ENCODE measurements at regions of chr6 and their contacts with region 1.

Region 1: GRCh38 chr6:139375232-139376016 is 976 bp upstream of the CITED2 start:
- DNase-seq: peak; percentile 90
- ATAC-seq: peak; percentile 75 to 85

Region 2: GRCh38 chr6:139323511-139324300 is 51.7 kb before region 1 on chr6:
- intact Hi-C with region 1: no loop called
- DNase-seq: peak; percentile 77
- ATAC-seq: peak; percentile 54 to 90

Region 3: GRCh38 chr6:139510040-139510790 is 134.8 kb after region 1 on chr6:
- intact Hi-C with region 1: loop called in 1 of 2 experiments (anchors 2 kb)
- DNase-seq: no peak
- ATAC-seq: peak; percentile 96 to 97

Region 4: DNA sequence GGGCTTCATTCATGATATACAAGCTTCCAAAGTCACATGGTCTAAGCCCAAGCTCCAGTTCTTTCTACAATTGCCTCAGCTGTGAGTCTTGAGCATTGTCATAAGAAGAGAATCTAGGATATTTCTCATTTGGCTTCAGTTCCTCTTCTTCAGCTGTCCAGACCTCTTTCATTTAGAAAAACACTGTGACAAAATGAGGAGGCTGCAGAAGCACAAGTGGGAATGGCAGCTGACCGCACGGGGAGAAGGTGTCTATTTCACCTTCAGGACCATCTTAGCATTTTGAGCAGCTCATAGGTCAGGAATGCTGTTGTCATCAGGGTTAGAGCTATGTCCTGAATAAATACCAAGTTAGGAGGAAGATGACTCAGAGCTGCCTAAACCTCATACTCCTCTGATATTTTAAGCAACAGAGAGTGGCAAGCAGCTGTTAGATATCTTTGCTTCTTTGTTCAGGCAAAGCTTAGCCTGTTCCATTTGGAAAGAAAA is 389.1 kb after region 1 on chr6:
- intact Hi-C with region 1: loop called in 1 of 2 experiments (anchors 10 kb)
- DNase-seq: no peak
- ATAC-seq: peak; percentile 89 to 99

Region 5: GRCh38 chr6:139881728-139882211 is 506.3 kb after region 1 on chr6:
- intact Hi-C with region 1: loop called in 1 of 2 experiments (anchors 10 kb)
- DNase-seq: no peak
- ATAC-seq: peak; percentile 67 to 71

Region 6: GRCh38 chr6:139965393-139965792 is 590.0 kb after region 1 on chr6:
- intact Hi-C with region 1: loop called in 1 of 2 experiments (anchors 5 kb)
- DNase-seq: no peak
- ATAC-seq: peak; percentile 34 to 60

Region 7: GRCh38 chr6:140078561-140079125 is 703.2 kb after region 1 on chr6:
- intact Hi-C with region 1: loop called (anchors 5 to 10 kb)
- DNase-seq: no peak
- ATAC-seq: peak; percentile 56 to 77